ENCODE measurements at regions of chr16 and their contacts with region 1.

Region 1: GRCh38 chr16:27235055-27235937 is 32.0 kb downstream of the KDM8 start:
- DNase-seq: peak; percentile 95 to 99 (median 96)
- H3K4me3 ChIP-seq: peak overlapping the region; percentile 26 to 45
- H3K4me3 Mint-ChIP-seq: peak overlapping the region; percentile 75 to 92 (median 84)
- H3K27ac ChIP-seq: peak overlapping the region; percentile 90
- H3K27ac Mint-ChIP-seq: peak overlapping the region; percentile 97 to 100 (median 100)
- H3K4me1 ChIP-seq: peaks cover 99% of the 10 kb centered on the region
- H3K4me1 Mint-ChIP-seq: peaks cover 72 to 99% (median 84%) of the 10 kb centered on the region in 4 donors
- H3K27me3 ChIP-seq: no peaks in the 10 kb centered on the region
- H3K27me3 Mint-ChIP-seq: no peaks in the 10 kb centered on the region

Region 2: GRCh38 chr16:27189335-27189972 is 45.8 kb before region 1 on chr16:
- CTCF ChIA-PET with region 1: interaction called, 105 read pairs
- POLR2A ChIA-PET with region 1: interaction called, 106 read pairs
- intact Hi-C with region 1: no loop called
- DNase-seq: no peak
- H3K4me3 ChIP-seq: no peak overlapping the region
- H3K4me3 Mint-ChIP-seq: no peak overlapping the region
- H3K27ac ChIP-seq: no peak overlapping the region
- H3K27ac Mint-ChIP-seq: no peak overlapping the region
- H3K4me1 ChIP-seq: peaks cover 6% of the 10 kb centered on the region
- H3K4me1 Mint-ChIP-seq: peaks cover 7 to 23% (median 11%) of the 10 kb centered on the region in 4 donors
- H3K27me3 ChIP-seq: no peaks in the 10 kb centered on the region
- H3K27me3 Mint-ChIP-seq: no peaks in the 10 kb centered on the region

Region 3: DNA sequence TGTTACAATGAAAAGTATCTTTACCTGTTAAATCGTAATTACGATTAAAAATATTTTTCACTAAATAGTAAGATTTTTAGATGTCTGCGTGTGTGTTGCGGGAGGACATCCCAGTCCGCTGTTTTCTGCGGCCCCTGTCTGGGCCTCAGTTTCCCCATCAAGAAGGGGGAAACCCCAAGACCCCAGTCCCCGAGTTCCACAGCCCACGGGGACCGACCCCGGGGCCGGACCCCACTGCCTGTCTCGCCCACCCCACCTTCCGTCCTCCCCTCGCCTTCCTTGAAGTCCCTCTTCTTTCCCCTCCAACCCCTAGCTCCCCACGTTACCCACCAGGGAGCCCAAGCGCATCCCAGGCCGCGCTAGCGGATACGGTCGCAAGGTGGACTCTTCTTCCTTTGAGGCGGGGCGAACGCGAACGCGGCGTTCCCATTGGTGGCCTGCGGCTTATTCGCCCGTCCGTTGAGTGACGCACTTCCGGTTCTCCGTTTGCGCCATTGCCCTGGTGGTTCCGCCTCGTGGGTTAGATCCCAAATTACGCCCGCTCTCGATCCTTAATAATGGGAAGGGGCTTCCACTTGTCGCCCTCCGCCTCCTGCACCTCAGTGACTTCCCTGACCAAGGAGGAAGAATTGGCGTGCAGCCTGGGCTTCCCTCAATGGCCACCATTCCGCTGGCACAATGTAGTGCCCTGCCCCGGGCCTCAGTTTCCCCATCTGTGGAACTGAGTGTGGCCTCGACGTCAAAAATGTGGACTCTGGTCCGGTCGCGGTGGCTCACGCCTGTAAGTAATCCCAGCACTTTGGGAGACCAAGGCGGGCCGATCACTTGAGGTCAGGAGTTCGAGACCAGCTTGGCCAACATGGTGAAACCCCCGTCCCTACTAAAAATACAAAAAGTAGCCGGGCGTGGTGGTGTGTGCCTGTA is 33.3 kb after region 1 on chr16 and contains the start of gene NSMCE1:
- CTCF ChIA-PET with region 1: interaction called, 58 read pairs
- POLR2A ChIA-PET with region 1: interaction called, 62 read pairs
- intact Hi-C with region 1: loop called (anchors 1 kb)
- DNase-seq: peak; percentile 92 to 94 (median 93)
- H3K4me3 ChIP-seq: peak within 1 kb of the TSS; percentile 74 to 89
- H3K4me3 Mint-ChIP-seq: peak within 1 kb of the TSS; percentile 95 to 100 (median 98)
- H3K27ac ChIP-seq: peak within 1 kb of the TSS; percentile 86
- H3K27ac Mint-ChIP-seq: peak within 1 kb of the TSS; percentile 94 to 99 (median 99)
- H3K4me1 ChIP-seq: peaks cover 23% of the 10 kb centered on the region
- H3K4me1 Mint-ChIP-seq: peaks cover 21 to 63% (median 47%) of the 10 kb centered on the region in 4 donors
- H3K27me3 ChIP-seq: no peaks in the 10 kb centered on the region
- H3K27me3 Mint-ChIP-seq: no peaks in the 10 kb centered on the region
- total RNA-seq, gene NSMCE1: 66.6 to 70.7 TPM

Region 4: DNA sequence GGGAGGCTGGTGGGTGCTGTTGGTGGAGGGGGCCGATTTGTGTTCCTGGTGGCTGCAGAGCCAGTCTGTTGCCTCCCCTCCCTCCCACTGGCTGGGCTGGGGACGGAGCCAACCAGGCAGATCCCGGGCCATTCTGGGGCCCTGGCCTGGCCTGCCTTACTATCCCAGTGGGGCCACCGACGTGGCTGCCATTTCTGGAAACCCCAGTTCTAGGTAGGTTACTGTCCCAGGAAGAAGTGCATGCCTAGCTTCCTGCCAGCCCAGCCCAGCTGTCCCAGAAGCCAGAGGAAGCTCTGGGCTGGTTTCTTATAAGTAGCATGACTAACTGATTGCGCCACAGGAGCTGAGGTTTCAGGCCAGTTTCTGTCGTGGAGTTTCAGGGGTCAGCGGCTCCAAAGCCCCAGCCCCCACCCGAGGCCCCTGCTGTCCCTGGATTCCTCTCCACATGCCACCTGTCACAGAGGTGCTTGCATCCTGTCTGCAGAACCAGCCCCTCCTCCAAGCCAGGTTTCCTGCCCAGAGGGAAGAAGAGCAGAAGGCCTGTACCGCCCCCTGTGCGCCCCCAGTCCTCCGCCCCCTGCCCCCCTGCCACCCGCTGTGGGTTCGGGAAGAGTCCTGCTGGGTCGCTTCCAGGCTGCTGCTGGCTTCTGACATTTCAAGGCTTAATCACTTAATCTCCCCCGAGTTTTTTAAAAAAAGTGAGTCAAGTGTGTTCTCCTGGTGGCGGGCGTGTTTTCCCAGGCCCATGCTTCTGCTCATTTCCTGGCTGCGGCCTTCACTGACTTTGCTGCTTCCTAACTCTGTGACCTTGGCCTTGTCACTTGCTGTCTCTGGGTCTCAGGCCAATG is 91.7 kb after region 1 on chr16:
- CTCF ChIA-PET with region 1: interaction called, 14 read pairs
- POLR2A ChIA-PET with region 1: interaction called, 144 read pairs
- intact Hi-C with region 1: no loop called
- DNase-seq: peak in 3 of 5 donors; percentile 24 to 47 (median 31)
- H3K4me3 ChIP-seq: no peak overlapping the region
- H3K4me3 Mint-ChIP-seq: peak overlapping the region; percentile 48 to 76 (median 64)
- H3K27ac ChIP-seq: peak overlapping the region; percentile 34
- H3K27ac Mint-ChIP-seq: peak overlapping the region; percentile 64 to 95 (median 85)
- H3K4me1 ChIP-seq: peaks cover 86% of the 10 kb centered on the region
- H3K4me1 Mint-ChIP-seq: peaks cover 45 to 92% (median 75%) of the 10 kb centered on the region in 4 donors
- H3K27me3 ChIP-seq: no peaks in the 10 kb centered on the region
- H3K27me3 Mint-ChIP-seq: no peaks in the 10 kb centered on the region

Region 5: GRCh38 chr16:27401768-27402568 is 166.7 kb after region 1 on chr16 and contains the start of gene IL21R:
- CTCF ChIA-PET with region 1: interaction called, 16 read pairs
- POLR2A ChIA-PET with region 1: interaction called, 70 read pairs
- intact Hi-C with region 1: loop called (anchors 1 kb)
- DNase-seq: peak; percentile 85 to 95 (median 88)
- H3K4me3 ChIP-seq: peak within 1 kb of the TSS; percentile 69 to 98
- H3K4me3 Mint-ChIP-seq: peak within 1 kb of the TSS; percentile 94 to 99 (median 98)
- H3K27ac ChIP-seq: peak within 1 kb of the TSS; percentile 83
- H3K27ac Mint-ChIP-seq: peak within 1 kb of the TSS; percentile 93 to 99 (median 96)
- H3K4me1 ChIP-seq: peaks cover 52% of the 10 kb centered on the region
- H3K4me1 Mint-ChIP-seq: peaks cover 34 to 79% (median 54%) of the 10 kb centered on the region in 4 donors
- H3K27me3 ChIP-seq: no peaks in the 10 kb centered on the region
- H3K27me3 Mint-ChIP-seq: no peaks in the 10 kb centered on the region
- total RNA-seq, gene IL21R: 28.3 to 29.1 TPM

Region 6: DNA sequence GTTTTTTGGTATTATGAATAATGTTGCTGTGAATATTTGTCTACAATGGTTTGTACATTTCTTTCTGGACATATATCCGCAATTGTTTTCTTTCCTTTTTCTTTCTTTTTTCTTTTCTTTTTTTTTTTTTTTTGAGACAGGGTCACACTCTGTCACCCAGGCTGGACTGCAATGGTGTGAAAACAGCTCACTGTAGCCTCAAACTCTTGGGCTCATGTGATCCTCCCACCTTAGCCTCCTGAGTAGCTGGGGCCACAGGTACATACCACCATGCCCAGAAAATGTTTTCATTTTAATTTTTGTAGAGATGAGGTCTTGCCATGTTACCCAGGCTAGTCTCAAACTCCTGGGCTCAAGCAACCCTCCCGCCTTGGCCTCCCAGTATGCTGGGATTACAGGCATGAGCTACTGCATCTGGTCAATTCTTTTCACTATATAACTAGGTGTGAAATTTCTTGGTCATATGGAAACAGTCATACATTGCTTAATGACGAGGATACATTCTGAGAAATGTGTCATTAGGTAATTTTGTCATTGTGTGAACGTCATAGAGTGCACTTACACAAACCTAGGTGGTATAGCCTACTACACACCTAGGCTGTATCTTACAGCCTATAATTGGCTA is 181.9 kb after region 1 on chr16:
- CTCF ChIA-PET with region 1: no interaction called
- POLR2A ChIA-PET with region 1: no interaction called
- intact Hi-C with region 1: no loop called
- DNase-seq: no peak
- H3K4me3 ChIP-seq: no peak overlapping the region
- H3K4me3 Mint-ChIP-seq: no peak overlapping the region
- H3K27ac ChIP-seq: no peak overlapping the region
- H3K27ac Mint-ChIP-seq: peak overlapping the region in 2 of 7 donors; percentile 1 to 48
- H3K4me1 ChIP-seq: peaks cover 27% of the 10 kb centered on the region
- H3K4me1 Mint-ChIP-seq: peaks cover 29 to 41% (median 35%) of the 10 kb centered on the region in 4 donors
- H3K27me3 ChIP-seq: no peaks in the 10 kb centered on the region
- H3K27me3 Mint-ChIP-seq: no peaks in the 10 kb centered on the region

Region 7: DNA sequence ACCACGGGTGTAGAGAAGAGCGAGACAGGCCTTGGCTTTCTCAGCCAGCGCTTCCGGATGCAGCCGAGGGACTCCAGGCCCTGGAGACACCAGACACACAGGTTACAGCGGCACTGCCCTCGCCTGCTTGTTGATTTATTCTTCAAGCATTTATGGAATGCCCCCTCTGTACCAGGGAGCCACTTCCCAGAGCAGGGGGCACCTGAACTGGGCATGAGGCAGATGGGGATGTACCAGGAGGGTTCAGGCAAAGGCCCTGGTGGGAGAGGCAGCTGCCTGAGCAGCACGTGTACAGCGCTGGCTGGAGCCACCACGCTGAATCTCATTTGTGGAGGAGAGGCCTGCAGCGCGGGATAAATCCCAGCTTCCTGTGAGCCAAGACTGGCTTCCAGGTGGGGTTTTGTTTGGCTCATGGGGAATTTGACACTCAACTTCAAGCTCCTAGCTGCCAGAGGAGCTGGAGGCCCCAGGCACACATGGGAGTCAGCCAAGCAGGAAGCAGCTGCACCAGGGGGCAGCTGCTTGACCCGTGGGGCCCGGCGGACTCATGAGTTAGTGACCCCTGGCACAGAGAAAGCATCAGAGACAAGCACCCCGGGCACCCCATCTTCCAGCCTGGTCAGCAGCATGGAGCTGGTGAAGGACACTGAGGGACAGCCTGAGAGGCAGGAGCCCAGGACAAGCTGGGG is 226.3 kb after region 1 on chr16:
- CTCF ChIA-PET with region 1: interaction called, 10 read pairs
- POLR2A ChIA-PET with region 1: interaction called, 20 read pairs
- intact Hi-C with region 1: loop called (anchors 1 kb)
- DNase-seq: no peak
- H3K4me3 ChIP-seq: no peak overlapping the region
- H3K4me3 Mint-ChIP-seq: peak overlapping the region in 1 of 8 donors; percentile 57
- H3K27ac ChIP-seq: no peak overlapping the region
- H3K27ac Mint-ChIP-seq: peak overlapping the region in 5 of 7 donors; percentile 12 to 81 (median 77)
- H3K4me1 ChIP-seq: peaks cover 61% of the 10 kb centered on the region
- H3K4me1 Mint-ChIP-seq: peaks cover 34 to 67% (median 50%) of the 10 kb centered on the region in 4 donors
- H3K27me3 ChIP-seq: no peaks in the 10 kb centered on the region
- H3K27me3 Mint-ChIP-seq: no peaks in the 10 kb centered on the region